Aorta (tissue), 5 donors: ENCODE measurements at regions of chr6 and their contacts with region 1.

Region 1: DNA sequence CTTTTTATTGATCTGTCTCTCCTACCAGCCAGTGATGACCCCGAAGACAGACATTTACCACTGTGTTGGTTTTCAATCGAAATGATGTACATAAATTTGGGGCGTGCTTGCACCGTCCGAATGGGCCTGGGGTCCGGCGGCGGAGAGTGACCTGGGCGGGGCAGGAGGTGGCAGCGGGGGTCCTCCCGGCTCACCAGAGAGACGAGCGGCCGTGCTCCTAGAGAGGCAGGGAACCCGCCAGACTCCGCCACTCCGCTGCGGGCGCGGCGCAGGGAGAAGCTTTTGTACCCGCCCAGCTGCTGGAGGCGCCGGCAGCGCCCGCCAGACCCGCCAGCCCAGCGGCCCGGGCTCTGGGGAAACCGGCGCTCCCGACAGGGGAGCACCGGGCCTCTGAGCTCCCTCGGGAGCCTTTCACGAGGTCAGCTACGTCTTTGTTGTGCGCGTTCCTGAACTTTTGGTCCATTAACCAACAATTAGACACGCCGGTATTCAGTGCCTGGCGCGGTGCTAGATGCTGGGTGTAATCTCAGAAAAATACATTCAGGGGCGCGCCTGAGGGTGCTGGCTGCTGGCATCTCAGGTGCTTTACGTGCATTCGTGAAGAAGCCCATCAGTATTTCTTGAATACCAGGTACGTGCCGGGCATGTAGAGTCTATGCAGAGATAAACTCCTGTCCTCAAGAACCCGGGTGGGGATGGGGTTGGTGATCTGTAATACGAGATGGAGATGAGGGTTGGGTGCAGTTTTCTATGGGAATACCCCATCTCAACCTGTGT is at the start of gene PGBD1:
- DNase-seq: peak; percentile 86 to 93
- ATAC-seq: peak; percentile 90
- H3K4me3 ChIP-seq: peak within 1 kb of the TSS; percentile 53 to 85
- H3K27ac ChIP-seq: no peak within 1 kb of the TSS
- H3K4me1 ChIP-seq: peaks cover 0 to 2% of the 10 kb centered on the region in 2 donors
- H3K27me3 ChIP-seq: no peaks in the 10 kb centered on the region
- total RNA-seq, gene PGBD1: 6.2 to 6.7 TPM

Region 2: DNA sequence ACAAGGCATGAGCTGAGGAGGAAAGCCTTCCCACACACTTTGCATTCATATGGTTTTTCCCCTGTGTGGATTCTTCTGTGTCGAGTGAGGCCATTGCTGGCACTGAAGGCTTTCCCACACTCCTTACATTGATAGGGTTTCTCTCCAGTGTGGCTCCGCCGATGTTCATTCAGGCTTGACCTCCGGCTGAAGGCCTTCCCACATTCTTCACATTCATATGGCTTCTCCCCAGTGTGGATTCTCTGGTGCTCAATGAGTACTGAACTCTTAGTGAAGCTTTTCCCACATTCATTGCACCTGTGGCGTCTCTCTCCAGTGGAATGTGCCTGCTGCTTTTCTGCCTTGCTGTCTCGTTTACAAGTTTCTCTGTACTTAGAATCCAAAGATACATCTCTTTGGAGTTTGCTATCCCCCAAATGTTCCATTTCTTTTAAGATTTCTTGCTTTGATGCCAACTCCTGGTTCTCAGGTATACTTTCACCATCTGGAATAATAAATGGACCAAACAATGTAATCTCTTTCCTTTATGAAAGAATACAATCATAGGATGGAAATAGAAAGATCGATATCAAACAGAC is 45.0 kb after region 1 on chr6:
- intact Hi-C with region 1: loop called in 1 of 2 experiments (anchors 5 kb)
- DNase-seq: no peak
- ATAC-seq: no peak
- H3K4me3 ChIP-seq: no peak overlapping the region
- H3K27ac ChIP-seq: no peak overlapping the region
- H3K4me1 ChIP-seq: no peaks in the 10 kb centered on the region
- H3K27me3 ChIP-seq: no peaks in the 10 kb centered on the region

Region 3: GRCh38 chr6:28349892-28350737 is 68.6 kb after region 1 on chr6 and contains the start of gene ZKSCAN3:
- intact Hi-C with region 1: loop called (anchors 5 to 10 kb)
- DNase-seq: peak; percentile 90 to 91
- ATAC-seq: peak; percentile 94
- H3K4me3 ChIP-seq: peak within 1 kb of the TSS; percentile 55 to 83
- H3K27ac ChIP-seq: peak within 1 kb of the TSS in 1 of 2 donors; percentile 66
- H3K4me1 ChIP-seq: no peaks in the 10 kb centered on the region
- H3K27me3 ChIP-seq: no peaks in the 10 kb centered on the region
- total RNA-seq, gene ZKSCAN3: 4.2 to 8.6 TPM